Psoas muscle (tissue), 8 donors: ENCODE measurements at regions of chr12 and their contacts with region 1.

Region 1: GRCh38 chr12:868722-869121 is 80.8 kb downstream of the RAD52 start:
- DNase-seq: no peak
- ATAC-seq: peak in 1 of 4 donors; percentile 10
- H3K4me3 ChIP-seq: no peak overlapping the region
- H3K27ac ChIP-seq: no peak overlapping the region
- H3K4me1 ChIP-seq: peaks cover 8% of the 10 kb centered on the region
- H3K27me3 ChIP-seq: no peaks in the 10 kb centered on the region
- CTCF ChIP-seq: no peak

Region 2: GRCh38 chr12:546921-547845 is 321.5 kb before region 1 on chr12:
- intact Hi-C with region 1: no loop called
- DNase-seq: peak; percentile 67 to 83
- ATAC-seq: peak; percentile 82 to 91 (median 85)
- H3K4me3 ChIP-seq: peak overlapping the region; percentile 25
- H3K27ac ChIP-seq: no peak overlapping the region
- H3K4me1 ChIP-seq: peaks cover 3% of the 10 kb centered on the region
- H3K27me3 ChIP-seq: peaks cover 0 to 4% (median 0%) of the 10 kb centered on the region in 3 donors
- CTCF ChIP-seq: peak; percentile 98

Region 3: GRCh38 chr12:905261-906031 is 36.7 kb after region 1 on chr12:
- intact Hi-C with region 1: loop called in 1 of 2 experiments (anchors 5 kb)
- DNase-seq: no peak
- ATAC-seq: no peak
- H3K4me3 ChIP-seq: no peak overlapping the region
- H3K27ac ChIP-seq: no peak overlapping the region
- H3K4me1 ChIP-seq: peaks cover 2% of the 10 kb centered on the region
- H3K27me3 ChIP-seq: no peaks in the 10 kb centered on the region
- CTCF ChIP-seq: no peak